OCI-LY7 (cell line): ENCODE measurements at regions of chr10 and their contacts with region 1.

Region 1: DNA sequence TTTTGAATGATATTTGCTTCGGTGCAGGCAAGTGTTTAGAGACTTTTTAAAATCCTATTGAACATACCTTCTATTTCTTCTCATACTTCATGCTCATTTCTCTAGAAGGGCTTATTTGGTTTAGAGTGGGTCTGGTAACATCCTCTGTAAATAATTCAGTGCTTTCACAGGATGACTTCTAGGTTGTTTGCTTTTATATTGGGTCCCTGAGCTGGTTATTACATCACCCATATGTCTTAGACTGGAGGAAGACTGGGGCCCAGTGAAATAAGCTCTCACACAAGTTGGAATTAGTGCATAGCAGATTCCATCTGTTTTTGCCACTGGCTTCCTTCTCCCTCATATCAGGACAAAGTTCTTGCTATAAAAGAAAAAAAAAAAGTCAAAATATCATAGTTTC is 6.5 kb downstream of the SUPV3L1 start:
- DNase-seq: no peak
- H3K4me3 ChIP-seq: no peak overlapping the region
- H3K27ac ChIP-seq: no peak overlapping the region
- H3K4me1 ChIP-seq: peaks cover 6% of the 10 kb centered on the region
- CTCF ChIP-seq: no peak

Region 2: DNA sequence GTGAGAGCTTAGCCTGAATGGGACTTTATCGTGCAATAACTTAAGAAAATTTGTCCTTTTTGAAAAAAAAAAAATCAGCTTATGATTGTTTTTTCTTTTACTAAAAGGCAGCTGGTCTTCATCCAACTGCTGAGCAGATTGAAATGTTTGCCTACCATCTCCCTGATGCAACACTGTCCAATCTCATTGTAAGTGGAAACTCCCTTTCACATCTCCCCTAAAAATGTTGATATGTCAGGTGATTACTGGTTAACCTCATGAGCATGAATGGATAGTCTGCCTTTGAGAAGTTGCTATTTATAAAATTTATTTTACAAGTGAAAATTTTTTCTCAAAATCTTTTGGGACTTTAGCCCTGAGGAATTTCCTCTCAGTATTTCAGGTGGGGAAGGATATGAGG is 15.8 kb after region 1 on chr10:
- CTCF ChIA-PET with region 1: no interaction called
- POLR2A ChIA-PET with region 1: interaction called, 10 read pairs
- intact Hi-C with region 1: no loop called
- DNase-seq: no peak
- H3K4me3 ChIP-seq: no peak overlapping the region
- H3K27ac ChIP-seq: no peak overlapping the region
- H3K4me1 ChIP-seq: no peaks in the 10 kb centered on the region
- CTCF ChIP-seq: no peak

Region 3: GRCh38 chr10:69237528-69238159 is 51.1 kb after region 1 on chr10:
- CTCF ChIA-PET with region 1: no interaction called
- POLR2A ChIA-PET with region 1: no interaction called
- intact Hi-C with region 1: no loop called
- DNase-seq: peak; percentile 76
- H3K4me3 ChIP-seq: no peak overlapping the region
- H3K27ac ChIP-seq: no peak overlapping the region
- H3K4me1 ChIP-seq: no peaks in the 10 kb centered on the region
- CTCF ChIP-seq: peak; percentile 96

Region 4: GRCh38 chr10:69295027-69295636 is 108.6 kb after region 1 on chr10:
- CTCF ChIA-PET with region 1: no interaction called
- POLR2A ChIA-PET with region 1: no interaction called
- intact Hi-C with region 1: no loop called
- DNase-seq: no peak
- H3K4me3 ChIP-seq: no peak overlapping the region
- H3K27ac ChIP-seq: no peak overlapping the region
- H3K4me1 ChIP-seq: no peaks in the 10 kb centered on the region
- CTCF ChIP-seq: no peak